Esophagus squamous epithelium (tissue), 5 donors: ENCODE measurements at regions of chr17 and their contacts with region 1.

Region 1: GRCh38 chr17:59155439-59156182 is at the start of gene PRR11:
- DNase-seq: peak; percentile 98
- H3K4me3 ChIP-seq: peak within 1 kb of the TSS; percentile 69 to 88 (median 76)
- H3K27ac ChIP-seq: peak within 1 kb of the TSS; percentile 84 to 94 (median 94)
- H3K4me1 ChIP-seq: peaks cover 4 to 70% (median 15%) of the 10 kb centered on the region in 3 donors
- H3K27me3 ChIP-seq: no peaks in the 10 kb centered on the region
- CTCF ChIP-seq: no peak
- POLR2A ChIP-seq: no peak
- total RNA-seq, gene PRR11: 5.1 to 13.4 (median 9.5) TPM

Region 2: DNA sequence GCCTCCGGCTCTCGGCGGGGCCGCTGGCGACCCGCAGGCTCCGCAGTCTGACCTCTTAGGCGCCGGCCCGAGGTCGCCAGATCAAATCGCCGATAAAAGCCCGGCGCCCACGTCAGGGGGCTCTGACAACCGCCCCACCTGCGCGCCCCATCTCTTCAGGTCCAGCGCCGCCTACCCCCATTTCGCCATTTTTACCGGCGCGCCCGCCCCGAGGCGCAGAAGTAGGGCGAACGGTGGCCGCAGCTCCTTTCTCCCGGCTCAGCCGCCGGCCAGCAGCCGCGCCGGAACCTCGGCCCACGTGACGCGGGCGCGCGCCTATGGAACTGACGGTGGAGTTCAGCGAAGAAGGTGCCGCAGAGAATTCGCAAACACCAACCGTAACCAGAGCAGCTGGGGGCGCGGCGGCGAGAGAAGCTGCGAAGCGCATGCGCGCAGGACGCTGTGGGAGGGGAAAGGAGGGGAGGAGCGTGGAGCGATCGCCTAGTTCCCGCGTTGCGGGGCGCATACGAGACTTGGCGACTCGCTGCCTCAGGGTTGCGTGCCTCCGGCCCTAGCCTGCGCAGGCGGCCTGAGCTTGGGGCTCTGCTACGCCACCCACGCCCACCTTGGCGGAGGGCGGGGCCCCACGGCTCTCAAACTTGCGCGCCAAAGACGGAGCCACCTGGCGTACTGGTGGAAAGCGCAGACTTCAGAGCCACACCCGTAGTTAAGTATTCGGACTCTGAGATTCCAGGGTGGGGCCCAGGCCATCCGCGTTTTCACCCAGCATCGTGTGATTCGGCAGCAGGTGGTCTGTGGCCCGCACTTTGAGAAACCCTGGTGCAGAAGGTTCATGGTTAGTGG is 48.9 kb before region 1 on chr17 and contains the start of gene TRIM37:
- intact Hi-C with region 1: loop called (anchors 10 kb)
- DNase-seq: peak; percentile 85
- H3K4me3 ChIP-seq: peak within 1 kb of the TSS; percentile 72 to 98 (median 84)
- H3K27ac ChIP-seq: peak within 1 kb of the TSS; percentile 90 to 95 (median 92)
- H3K4me1 ChIP-seq: peaks cover 0 to 43% (median 13%) of the 10 kb centered on the region in 3 donors
- H3K27me3 ChIP-seq: no peaks in the 10 kb centered on the region
- CTCF ChIP-seq: peak in 3 of 6 experiments; percentile 10 to 20 (median 10)
- POLR2A ChIP-seq: peak in 3 of 4 donors; percentile 30 to 79 (median 71)
- total RNA-seq, gene TRIM37: 6.6 to 19.5 (median 17.1) TPM

Region 3: DNA sequence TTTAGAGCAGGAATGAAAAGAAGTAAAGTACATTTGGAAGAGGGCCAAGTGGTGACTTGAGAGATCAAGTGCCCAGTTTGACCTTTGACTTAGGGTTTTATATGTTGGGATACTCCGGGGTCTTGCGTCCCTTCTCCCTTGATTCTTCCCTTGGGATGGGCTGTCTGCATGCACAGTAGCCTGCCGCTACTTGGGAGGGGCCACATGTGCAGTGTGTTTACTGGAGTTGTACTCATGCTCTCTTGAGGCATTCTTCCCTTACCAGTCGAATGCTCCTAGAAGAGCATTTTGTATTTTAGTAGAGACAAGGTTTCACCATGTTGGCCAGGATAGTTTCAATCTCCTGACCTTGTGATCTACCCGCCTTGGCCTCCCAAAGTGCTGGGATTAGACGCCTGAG is 88.5 kb after region 1 on chr17:
- intact Hi-C with region 1: no loop called
- DNase-seq: no peak
- H3K4me3 ChIP-seq: no peak overlapping the region
- H3K27ac ChIP-seq: no peak overlapping the region
- H3K4me1 ChIP-seq: no peaks in the 10 kb centered on the region
- H3K27me3 ChIP-seq: no peaks in the 10 kb centered on the region
- CTCF ChIP-seq: no peak
- POLR2A ChIP-seq: no peak

Region 4: DNA sequence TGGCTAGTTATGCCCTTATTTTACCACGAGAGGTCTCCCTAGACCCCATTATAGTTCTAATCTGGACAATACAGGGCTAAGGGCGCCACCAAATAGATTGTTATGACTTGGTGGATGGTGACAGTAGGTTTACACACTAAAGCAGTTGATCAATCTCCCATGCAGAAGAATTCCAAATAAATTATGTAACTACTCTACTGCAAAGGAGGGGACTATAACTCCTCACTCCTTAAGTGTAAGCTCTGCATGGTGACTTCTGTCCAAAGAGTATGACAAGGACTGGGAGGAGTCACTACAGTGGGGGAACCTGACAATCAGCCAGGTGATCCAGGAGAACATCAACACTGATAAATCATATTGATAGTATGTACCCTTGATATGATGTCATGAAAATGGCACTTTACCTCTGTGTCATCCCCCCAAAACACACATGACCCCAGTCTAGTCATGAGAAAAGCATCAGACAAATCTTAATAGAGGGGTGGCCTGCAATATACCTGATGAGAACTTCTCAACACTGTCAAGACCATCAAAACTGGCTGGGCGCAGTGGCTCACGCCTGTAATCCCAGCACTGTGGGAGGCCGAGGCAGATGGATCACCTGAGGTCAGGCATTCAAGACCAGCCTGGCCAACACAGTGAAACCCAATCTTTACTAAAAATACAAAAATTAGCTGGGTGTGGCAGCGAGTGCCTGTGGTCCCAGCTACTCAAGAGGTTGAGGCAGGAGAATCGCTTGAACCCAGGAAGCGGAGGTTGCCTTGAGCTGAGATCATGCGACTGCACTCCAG is 155.7 kb after region 1 on chr17:
- intact Hi-C with region 1: no loop called
- DNase-seq: no peak
- H3K4me3 ChIP-seq: no peak overlapping the region
- H3K27ac ChIP-seq: no peak overlapping the region
- H3K4me1 ChIP-seq: peaks cover 0 to 7% (median 3%) of the 10 kb centered on the region in 3 donors
- H3K27me3 ChIP-seq: no peaks in the 10 kb centered on the region
- CTCF ChIP-seq: peak in 5 of 6 experiments; percentile 72 to 89 (median 83)
- POLR2A ChIP-seq: no peak